Heart left ventricle (tissue), 16 donors: ENCODE measurements at regions of chr16 and their contacts with region 1.

Region 1: GRCh38 chr16:346587-346986 is 5.9 kb downstream of the AXIN1 start:
- DNase-seq: no peak
- ATAC-seq: peak in 2 of 4 donors; percentile 17 to 20
- H3K4me3 ChIP-seq: no peak overlapping the region
- H3K27ac ChIP-seq: no peak overlapping the region
- H3K4me1 ChIP-seq: peaks cover 0 to 26% (median 5%) of the 10 kb centered on the region in 12 donors
- H3K27me3 ChIP-seq: no peaks in the 10 kb centered on the region
- CTCF ChIP-seq: no peak
- POLR2A ChIP-seq: no peak

Region 2: GRCh38 chr16:287298-287811 is 59.2 kb before region 1 on chr16:
- intact Hi-C with region 1: loop called in 1 of 10 experiments (anchors 5 kb)
- DNase-seq: no peak
- ATAC-seq: no peak
- H3K4me3 ChIP-seq: no peak overlapping the region
- H3K27ac ChIP-seq: no peak overlapping the region
- H3K4me1 ChIP-seq: no peaks in the 10 kb centered on the region
- H3K27me3 ChIP-seq: no peaks in the 10 kb centered on the region
- CTCF ChIP-seq: no peak
- POLR2A ChIP-seq: no peak